ENCODE measurements at regions of chr9 and their contacts with region 1.

Region 1: GRCh38 chr9:85001925-85002324 is 332.4 kb downstream of the NTRK2 start:
- DNase-seq: no peak
- H3K4me3 ChIP-seq: no peak overlapping the region
- H3K27ac ChIP-seq: no peak overlapping the region
- H3K4me1 ChIP-seq: no peaks in the 10 kb centered on the region
- H3K27me3 ChIP-seq: no peaks in the 10 kb centered on the region
- CTCF ChIP-seq: no peak
- POLR2A ChIP-seq: no peak

Region 2: DNA sequence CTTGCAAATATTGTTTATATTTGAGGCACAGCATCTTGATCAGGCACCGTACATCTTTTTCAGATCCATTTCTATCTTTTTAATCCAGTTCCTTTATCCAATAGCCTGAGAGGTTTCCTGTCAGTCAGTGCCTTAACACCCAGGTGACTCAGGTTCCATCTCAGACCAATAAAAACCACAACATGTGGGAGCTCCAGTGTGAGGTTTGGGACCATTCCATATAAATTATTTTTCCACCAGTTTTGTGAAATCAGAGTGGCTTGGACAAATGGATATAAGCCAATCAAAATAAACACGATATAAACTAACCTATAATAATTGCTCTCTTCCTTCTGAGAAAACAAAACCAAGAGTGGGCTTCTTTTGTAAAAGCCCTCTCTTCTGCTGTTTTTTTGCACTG is 18.9 kb after region 1 on chr9:
- intact Hi-C with region 1: loop called (anchors 2 kb)
- DNase-seq: no peak
- H3K4me3 ChIP-seq: no peak overlapping the region
- H3K27ac ChIP-seq: no peak overlapping the region
- H3K4me1 ChIP-seq: no peaks in the 10 kb centered on the region
- H3K27me3 ChIP-seq: no peaks in the 10 kb centered on the region
- CTCF ChIP-seq: no peak
- POLR2A ChIP-seq: no peak

Region 3: GRCh38 chr9:86795823-86796553 is 1794.1 kb after region 1 on chr9:
- intact Hi-C with region 1: no loop called
- DNase-seq: peak in 1 of 2 donors; percentile 50
- H3K4me3 ChIP-seq: peak overlapping the region; percentile 34 to 43 (median 37)
- H3K27ac ChIP-seq: peak overlapping the region; percentile 75 to 83
- H3K4me1 ChIP-seq: no peaks in the 10 kb centered on the region
- H3K27me3 ChIP-seq: no peaks in the 10 kb centered on the region
- CTCF ChIP-seq: peak in 1 of 3 donors; percentile 23
- POLR2A ChIP-seq: no peak